ENCODE measurements at regions of chr20 and their contacts with region 1.

Region 1: GRCh38 chr20:856361-857040 is 23.0 kb downstream of the FAM110A start:
- DNase-seq: peak in 7 of 9 donors; percentile 22 to 52 (median 39)
- ATAC-seq: peak; percentile 82
- H3K4me3 ChIP-seq: peak overlapping the region; percentile 6
- H3K4me3 Mint-ChIP-seq: peak overlapping the region; percentile 45 to 77 (median 66)
- H3K27ac ChIP-seq: peak overlapping the region; percentile 51
- H3K27ac Mint-ChIP-seq: peak overlapping the region; percentile 64 to 91 (median 80)
- H3K4me1 ChIP-seq: peaks cover 14 to 32% of the 10 kb centered on the region in 2 donors
- H3K4me1 Mint-ChIP-seq: peaks cover 38 to 86% (median 70%) of the 10 kb centered on the region in 7 donors
- H3K27me3 ChIP-seq: no peaks in the 10 kb centered on the region
- H3K27me3 Mint-ChIP-seq: no peaks in the 10 kb centered on the region

Region 2: GRCh38 chr20:815914-816606 is 40.4 kb before region 1 on chr20:
- CTCF ChIA-PET with region 1: no interaction called
- POLR2A ChIA-PET with region 1: no interaction called
- intact Hi-C with region 1: no loop called
- DNase-seq: peak; percentile 47 to 73 (median 64)
- ATAC-seq: peak; percentile 69
- H3K4me3 ChIP-seq: no peak overlapping the region
- H3K4me3 Mint-ChIP-seq: no peak overlapping the region
- H3K27ac ChIP-seq: no peak overlapping the region
- H3K27ac Mint-ChIP-seq: peak overlapping the region in 4 of 9 donors; percentile 1 to 57 (median 31)
- H3K4me1 ChIP-seq: no peaks in the 10 kb centered on the region
- H3K4me1 Mint-ChIP-seq: peaks cover 5 to 13% (median 9%) of the 10 kb centered on the region in 7 donors
- H3K27me3 ChIP-seq: no peaks in the 10 kb centered on the region
- H3K27me3 Mint-ChIP-seq: peaks cover 9 to 27% (median 14%) of the 10 kb centered on the region in 5 donors

Region 3: DNA sequence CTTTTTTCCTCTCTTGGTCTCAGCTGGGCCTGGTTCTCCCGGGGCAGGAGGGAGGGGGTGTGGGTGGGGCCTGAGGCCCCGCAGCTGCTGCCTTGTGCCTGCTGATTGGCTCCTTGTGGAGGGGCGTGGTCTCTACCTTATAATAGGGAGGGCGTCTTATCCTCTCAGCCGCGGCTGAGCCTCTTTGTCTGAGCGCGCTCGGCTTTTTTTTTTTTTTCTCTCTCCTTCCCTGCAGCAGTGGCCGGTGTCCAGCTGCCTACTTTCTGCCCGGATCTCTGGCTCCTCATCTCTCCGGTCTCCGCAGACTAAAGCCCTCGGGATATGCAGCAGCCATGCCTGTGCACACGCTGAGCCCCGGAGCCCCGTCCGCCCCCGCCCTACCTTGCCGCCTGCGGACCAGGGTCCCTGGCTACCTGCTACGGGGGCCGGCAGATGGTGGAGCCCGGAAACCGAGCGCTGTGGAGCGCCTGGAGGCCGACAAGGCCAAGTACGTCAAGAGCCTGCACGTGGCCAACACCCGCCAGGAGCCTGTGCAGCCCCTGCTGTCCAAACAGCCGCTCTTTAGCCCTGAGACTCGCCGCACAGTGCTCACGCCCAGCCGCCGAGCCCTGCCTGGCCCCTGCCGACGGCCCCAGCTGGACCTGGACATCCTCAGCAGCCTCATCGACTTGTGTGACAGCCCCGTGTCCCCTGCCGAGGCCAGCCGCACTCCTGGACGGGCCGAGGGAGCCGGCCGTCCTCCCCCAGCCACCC is 11.9 kb before region 1 on chr20:
- CTCF ChIA-PET with region 1: interaction called, 4 read pairs
- POLR2A ChIA-PET with region 1: interaction called, 13 read pairs
- intact Hi-C with region 1: loop called (anchors 1 to 2 kb)
- DNase-seq: peak; percentile 55 to 95 (median 83)
- ATAC-seq: peak; percentile 98
- H3K4me3 ChIP-seq: peak overlapping the region; percentile 75
- H3K4me3 Mint-ChIP-seq: peak overlapping the region; percentile 88 to 97 (median 94)
- H3K27ac ChIP-seq: peak overlapping the region; percentile 70
- H3K27ac Mint-ChIP-seq: peak overlapping the region in 8 of 9 donors; percentile 70 to 93 (median 86)
- H3K4me1 ChIP-seq: peaks cover 40 to 45% of the 10 kb centered on the region in 2 donors
- H3K4me1 Mint-ChIP-seq: peaks cover 30 to 58% (median 52%) of the 10 kb centered on the region in 7 donors
- H3K27me3 ChIP-seq: no peaks in the 10 kb centered on the region
- H3K27me3 Mint-ChIP-seq: no peaks in the 10 kb centered on the region

Region 4: GRCh38 chr20:872855-873521 is 16.5 kb after region 1 on chr20:
- CTCF ChIA-PET with region 1: no interaction called
- POLR2A ChIA-PET with region 1: no interaction called
- intact Hi-C with region 1: no loop called
- DNase-seq: no peak
- ATAC-seq: no peak
- H3K4me3 ChIP-seq: no peak overlapping the region
- H3K4me3 Mint-ChIP-seq: no peak overlapping the region
- H3K27ac ChIP-seq: no peak overlapping the region
- H3K27ac Mint-ChIP-seq: no peak overlapping the region
- H3K4me1 ChIP-seq: no peaks in the 10 kb centered on the region
- H3K4me1 Mint-ChIP-seq: peaks cover 0 to 7% (median 4%) of the 10 kb centered on the region in 7 donors
- H3K27me3 ChIP-seq: no peaks in the 10 kb centered on the region
- H3K27me3 Mint-ChIP-seq: peaks cover 0 to 6% (median 5%) of the 10 kb centered on the region in 5 donors

Region 5: DNA sequence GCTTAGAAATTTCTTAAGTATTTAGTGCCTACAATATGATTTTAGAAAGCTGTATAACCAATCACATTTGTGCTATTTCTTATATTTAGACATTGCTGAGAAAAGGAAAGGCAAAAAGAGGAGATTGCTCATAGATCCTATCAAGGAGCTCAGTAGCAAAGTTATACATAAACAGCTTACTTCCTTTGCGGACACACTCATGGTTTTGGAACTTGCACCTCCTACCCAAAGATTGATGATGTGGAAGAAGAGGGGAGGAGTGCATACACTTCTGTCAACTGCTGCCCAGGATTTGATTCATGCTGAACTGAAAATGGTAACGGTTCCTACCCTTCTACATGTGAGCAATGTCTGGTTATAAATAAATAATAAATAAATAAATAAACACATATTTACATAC is 386.0 kb after region 1 on chr20:
- CTCF ChIA-PET with region 1: no interaction called
- POLR2A ChIA-PET with region 1: no interaction called
- intact Hi-C with region 1: no loop called
- DNase-seq: no peak
- ATAC-seq: no peak
- H3K4me3 ChIP-seq: no peak overlapping the region
- H3K4me3 Mint-ChIP-seq: peak overlapping the region in 1 of 10 donors; percentile 20
- H3K27ac ChIP-seq: no peak overlapping the region
- H3K27ac Mint-ChIP-seq: no peak overlapping the region
- H3K4me1 ChIP-seq: no peaks in the 10 kb centered on the region
- H3K4me1 Mint-ChIP-seq: peaks cover 0 to 8% (median 4%) of the 10 kb centered on the region in 7 donors
- H3K27me3 ChIP-seq: no peaks in the 10 kb centered on the region
- H3K27me3 Mint-ChIP-seq: peaks cover 0 to 29% (median 12%) of the 10 kb centered on the region in 5 donors

Measured in naive thymus-derived CD4-positive, alpha-beta T cell (primary cell).